Posterior vena cava (tissue), 2 donors: ENCODE measurements at regions of chrX and their contacts with region 1.

Region 1: DNA sequence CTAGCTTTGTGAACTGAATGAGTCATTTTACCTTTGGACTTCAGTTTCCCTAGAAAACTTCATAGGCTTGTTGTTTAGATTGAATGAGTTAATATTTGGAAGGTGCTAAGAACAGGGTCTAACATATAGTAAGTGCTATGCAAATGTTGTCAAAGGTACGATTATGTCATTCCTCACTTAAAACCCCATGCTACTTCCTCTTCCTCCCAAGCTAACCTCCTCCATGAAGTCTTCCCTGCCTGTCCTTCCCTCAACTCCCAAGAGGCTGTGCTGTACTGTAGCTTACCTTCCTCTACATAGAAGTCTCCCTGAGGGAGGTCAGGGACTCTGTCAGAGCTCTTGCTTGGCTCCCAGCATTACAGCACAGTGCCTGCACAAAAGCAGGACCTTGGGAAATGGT is 103.4 kb upstream of the PJA1 start:
- DNase-seq: peak; percentile 23

Region 2: GRCh38 chrX:68238568-68238967 is 1030.0 kb before region 1 on chrX:
- intact Hi-C with region 1: loop called in 1 of 2 experiments (anchors 5 kb)
- DNase-seq: no peak

Region 3: GRCh38 chrX:69291116-69291515 is 22.5 kb after region 1 on chrX:
- intact Hi-C with region 1: loop called in 1 of 2 experiments (anchors 1 kb)
- DNase-seq: no peak

Region 4: DNA sequence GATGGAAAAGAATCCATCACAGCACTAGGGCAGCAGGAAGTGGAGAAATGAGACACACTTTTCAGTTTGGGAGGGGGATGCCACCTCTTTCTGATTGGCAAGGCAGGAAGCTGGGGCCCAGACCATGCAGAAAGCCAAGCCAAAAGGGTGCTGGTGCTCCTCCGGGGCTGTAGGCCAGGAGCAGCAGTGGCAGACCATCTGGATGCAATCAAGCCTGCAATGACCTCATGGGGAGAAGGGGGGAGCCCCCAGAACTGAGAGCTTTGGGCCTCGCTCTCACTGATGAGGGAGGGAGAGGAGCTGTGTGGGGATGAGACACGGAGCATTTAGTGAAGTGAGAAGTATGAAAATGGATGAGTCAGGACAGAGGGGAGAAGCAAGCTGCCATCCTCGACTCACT is 94.2 kb after region 1 on chrX:
- intact Hi-C with region 1: no loop called
- DNase-seq: no peak